ENCODE measurements at regions of chr6 and their contacts with region 1.

Region 1: DNA sequence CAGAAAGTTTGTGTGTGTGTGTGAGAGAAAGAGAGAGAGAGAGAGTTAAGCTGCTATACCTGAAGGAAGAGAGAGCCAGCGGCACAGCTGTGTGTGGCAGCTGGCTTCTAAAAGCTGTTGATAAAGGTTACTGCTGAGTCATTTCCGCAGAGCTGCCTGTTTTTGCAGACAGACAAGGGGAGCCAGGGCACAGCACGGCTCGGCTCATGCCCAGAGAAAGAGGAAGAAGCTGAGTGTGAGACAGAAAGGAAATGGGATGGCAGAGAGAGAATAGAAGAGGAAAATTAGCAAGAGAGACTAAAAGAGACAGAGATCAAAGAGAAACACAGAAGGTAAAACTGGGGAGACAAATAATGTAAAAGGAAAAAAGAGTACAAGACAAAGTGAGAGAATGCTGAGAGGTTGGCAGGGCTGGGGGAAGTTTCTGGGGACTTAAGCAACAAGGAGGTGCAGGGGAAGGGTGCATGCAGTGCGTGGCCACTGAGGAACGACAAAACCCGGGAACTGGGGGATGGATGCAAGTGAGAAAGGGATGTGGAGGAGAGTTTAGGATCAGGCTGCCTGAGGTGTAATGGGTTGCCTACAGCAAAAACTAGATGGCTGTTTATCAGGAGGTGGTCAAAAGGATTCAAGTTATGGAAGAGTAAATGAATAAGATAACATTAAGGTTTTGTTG is 22.7 kb downstream of the HLA-A start:
- DNase-seq: peak in 1 of 2 experiments; percentile 69
- H3K4me3 ChIP-seq: peak overlapping the region in 3 of 4 experiments; percentile 19 to 42 (median 32); a peak in 4 of 8 replicates
- H3K27ac ChIP-seq: peak overlapping the region; percentile 75; the same call in 1 of the 2 replicates
- H3K4me1 ChIP-seq: peaks cover 7 to 17% (median 13%) of the 10 kb centered on the region in 4 experiments
- H3K27me3 ChIP-seq: no peaks in the 10 kb centered on the region
- CTCF ChIP-seq: no peak
- EP300 ChIP-seq: peak in 1 of 2 experiments; percentile 75; a peak in 1 of 3 replicates
- POLR2A ChIP-seq: peak; percentile 18 to 47; a peak in 2 of 3 replicates
- RAD21 ChIP-seq: no peak

Region 2: DNA sequence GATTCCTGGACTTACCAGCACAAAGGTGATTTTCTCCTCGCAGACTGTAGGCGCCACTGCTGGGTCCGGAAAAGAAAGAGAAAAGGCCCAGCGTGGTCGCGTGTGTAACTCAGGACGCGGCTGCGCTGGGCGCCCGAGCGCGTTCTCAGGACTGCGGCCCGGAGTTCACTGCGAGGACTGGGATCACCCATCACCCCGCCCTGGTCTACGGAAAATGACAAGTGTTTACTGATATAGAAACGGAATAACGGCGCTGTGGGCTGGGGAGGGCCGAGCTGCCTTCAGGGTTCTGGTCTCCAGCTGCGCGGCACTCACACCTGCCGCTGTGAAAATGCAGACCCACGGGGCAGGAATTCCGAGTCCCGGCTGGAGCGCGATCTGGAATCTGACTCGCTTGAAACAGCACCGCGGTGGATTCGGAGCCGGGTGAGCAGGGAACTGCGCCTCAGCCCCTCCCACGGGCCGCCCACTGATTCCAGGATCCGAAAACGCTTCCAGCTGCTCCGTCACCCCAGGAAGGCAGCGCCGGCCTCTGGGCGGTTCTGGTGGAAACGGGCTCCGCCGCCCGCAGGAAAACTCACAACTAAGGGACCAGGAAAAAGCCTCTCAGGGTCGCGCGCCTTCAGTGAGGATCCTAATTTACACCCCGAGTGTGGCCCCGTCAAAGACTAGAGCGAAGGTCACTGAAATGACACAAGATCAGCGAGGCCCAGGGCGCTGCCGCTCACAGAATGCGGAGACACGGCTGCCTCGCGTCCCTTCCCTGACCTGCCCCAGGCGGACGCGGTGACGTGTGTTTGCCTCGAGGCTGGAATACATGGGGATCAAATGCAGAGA is 11.8 kb after region 1 on chr6:
- CTCF ChIA-PET with region 1: interaction called, 17 read pairs
- POLR2A ChIA-PET with region 1: interaction called, 27 read pairs
- DNase-seq: peak in 1 of 2 experiments; percentile 70
- H3K4me3 ChIP-seq: peak overlapping the region; percentile 35 to 59 (median 49)
- H3K27ac ChIP-seq: no peak overlapping the region
- H3K4me1 ChIP-seq: peaks cover 0 to 12% (median 5%) of the 10 kb centered on the region in 4 experiments; a peak in 5 of 7 replicates
- H3K27me3 ChIP-seq: peaks cover 19 to 46% (median 44%) of the 10 kb centered on the region in 4 experiments
- CTCF ChIP-seq: peak in 2 of 3 experiments; percentile 20 to 26; a peak in 2 of 4 replicates
- EP300 ChIP-seq: no peak
- POLR2A ChIP-seq: no peak
- RAD21 ChIP-seq: peak in 1 of 2 experiments; percentile 25; a peak in 2 of 4 replicates

Region 3: DNA sequence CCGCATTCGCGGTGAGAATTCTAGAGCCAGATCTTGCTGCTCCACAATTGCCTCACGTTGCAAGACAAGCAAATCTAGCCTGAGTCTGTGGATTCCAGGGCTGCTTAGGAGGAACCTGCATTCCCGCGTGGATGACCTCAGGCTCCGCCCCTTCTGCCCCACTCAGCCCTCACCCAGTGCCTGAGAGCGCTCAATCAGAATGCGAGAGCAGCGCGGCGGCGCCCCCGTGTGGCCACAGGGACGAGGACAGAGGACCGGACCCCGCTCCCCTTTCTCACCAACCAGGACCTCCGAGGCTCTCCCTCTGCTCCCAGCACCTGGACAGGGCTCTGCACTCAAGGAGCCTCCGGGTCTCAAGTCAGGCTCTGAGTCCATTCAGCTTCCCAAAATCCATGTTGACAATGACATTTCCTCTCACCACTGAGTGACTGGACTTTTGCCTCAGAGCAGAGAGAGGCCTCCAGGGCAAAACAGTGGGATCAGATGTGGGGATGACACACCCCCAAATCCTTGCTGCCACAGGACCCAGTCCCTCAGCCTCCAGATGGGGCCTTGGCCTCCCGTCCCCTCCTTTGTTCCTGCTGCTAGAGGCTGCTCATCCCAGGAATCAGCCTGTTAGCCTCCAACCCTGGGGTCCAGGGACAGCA is 431.9 kb after region 1 on chr6:
- CTCF ChIA-PET with region 1: no interaction called
- POLR2A ChIA-PET with region 1: no interaction called
- DNase-seq: peak; percentile 53 to 99
- H3K4me3 ChIP-seq: peak overlapping the region in 1 of 4 experiments; percentile 21; a peak in 1 of 8 replicates
- H3K27ac ChIP-seq: no peak overlapping the region
- H3K4me1 ChIP-seq: no peaks in the 10 kb centered on the region
- H3K27me3 ChIP-seq: no peaks in the 10 kb centered on the region
- CTCF ChIP-seq: peak; percentile 93 to 96 (median 95)
- EP300 ChIP-seq: no peak
- POLR2A ChIP-seq: no peak
- RAD21 ChIP-seq: peak; percentile 86 to 90

Measured in H1 (cell line).